A549 (cell line): ENCODE measurements at regions of chr18 and their contacts with region 1.

Region 1: GRCh38 chr18:21444465-21445023 is 156.0 kb downstream of the ESCO1 start:
- DNase-seq: peak; percentile 32 to 69
- ATAC-seq: peak in 1 of 2 experiments; percentile 83; a peak in 3 of 6 replicates
- H3K4me3 ChIP-seq: no peak overlapping the region
- H3K27ac ChIP-seq: no peak overlapping the region; a peak in 1 of 6 replicates
- H3K4me1 ChIP-seq: peaks cover 8% of the 10 kb centered on the region; the same call in 2 of the 3 replicates
- CTCF ChIP-seq: peak; percentile 69
- EP300 ChIP-seq: no peak
- POLR2A ChIP-seq: no peak
- RAD21 ChIP-seq: peak; percentile 78 to 82

Region 2: DNA sequence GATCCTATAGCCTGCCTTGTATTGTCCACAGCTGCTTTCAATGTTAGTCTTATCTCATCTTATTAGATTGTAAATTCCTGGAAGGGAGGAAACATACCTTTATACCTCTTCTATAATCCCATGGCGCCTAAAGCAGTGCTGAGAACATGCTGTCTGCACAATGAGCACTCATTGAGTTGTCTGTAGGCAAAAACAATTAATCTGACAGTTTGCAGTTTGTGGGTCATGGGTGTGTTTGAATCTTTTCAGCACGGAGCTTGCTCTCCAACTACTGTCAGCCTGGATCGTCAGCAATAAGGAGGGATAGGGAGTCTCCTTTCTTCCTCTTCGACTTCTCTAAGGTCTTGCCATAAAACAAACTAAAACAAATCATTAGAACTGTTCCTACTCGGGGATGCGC is 229.1 kb before region 1 on chr18:
- CTCF ChIA-PET with region 1: interaction called, 14 read pairs
- POLR2A ChIA-PET with region 1: no interaction called
- DNase-seq: no peak
- ATAC-seq: no peak
- H3K4me3 ChIP-seq: no peak overlapping the region
- H3K27ac ChIP-seq: no peak overlapping the region
- H3K4me1 ChIP-seq: no peaks in the 10 kb centered on the region
- CTCF ChIP-seq: no peak
- EP300 ChIP-seq: no peak
- POLR2A ChIP-seq: no peak
- RAD21 ChIP-seq: no peak

Region 3: DNA sequence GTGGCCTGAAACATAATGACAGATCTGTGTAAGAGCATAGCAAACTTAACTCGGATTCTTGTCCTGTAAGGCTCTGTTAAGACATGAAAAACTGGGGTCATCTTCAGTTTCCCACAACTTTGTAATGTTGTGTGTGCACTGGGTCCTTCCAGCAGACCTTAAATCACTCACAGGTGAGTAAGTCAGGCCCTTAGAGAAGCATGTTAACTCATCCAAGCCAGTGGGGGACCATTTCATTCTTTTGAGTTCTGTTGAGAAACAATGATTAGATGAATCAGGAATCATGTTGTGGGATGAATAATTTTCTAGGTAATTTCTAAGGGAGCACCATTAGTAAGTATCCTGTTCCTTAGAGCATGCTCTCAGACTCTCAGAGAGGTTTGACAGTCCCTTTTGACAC is 11.1 kb before region 1 on chr18:
- CTCF ChIA-PET with region 1: interaction called, 11 read pairs
- POLR2A ChIA-PET with region 1: no interaction called
- DNase-seq: no peak
- ATAC-seq: no peak
- H3K4me3 ChIP-seq: no peak overlapping the region
- H3K27ac ChIP-seq: no peak overlapping the region
- H3K4me1 ChIP-seq: no peaks in the 10 kb centered on the region
- CTCF ChIP-seq: no peak
- EP300 ChIP-seq: no peak
- POLR2A ChIP-seq: no peak
- RAD21 ChIP-seq: no peak

Region 4: GRCh38 chr18:21468514-21469164 is 24.1 kb after region 1 on chr18:
- CTCF ChIA-PET with region 1: no interaction called
- POLR2A ChIA-PET with region 1: no interaction called
- DNase-seq: no peak
- ATAC-seq: no peak
- H3K4me3 ChIP-seq: no peak overlapping the region
- H3K27ac ChIP-seq: no peak overlapping the region
- H3K4me1 ChIP-seq: no peaks in the 10 kb centered on the region
- CTCF ChIP-seq: no peak
- EP300 ChIP-seq: no peak
- POLR2A ChIP-seq: no peak
- RAD21 ChIP-seq: no peak

Region 5: DNA sequence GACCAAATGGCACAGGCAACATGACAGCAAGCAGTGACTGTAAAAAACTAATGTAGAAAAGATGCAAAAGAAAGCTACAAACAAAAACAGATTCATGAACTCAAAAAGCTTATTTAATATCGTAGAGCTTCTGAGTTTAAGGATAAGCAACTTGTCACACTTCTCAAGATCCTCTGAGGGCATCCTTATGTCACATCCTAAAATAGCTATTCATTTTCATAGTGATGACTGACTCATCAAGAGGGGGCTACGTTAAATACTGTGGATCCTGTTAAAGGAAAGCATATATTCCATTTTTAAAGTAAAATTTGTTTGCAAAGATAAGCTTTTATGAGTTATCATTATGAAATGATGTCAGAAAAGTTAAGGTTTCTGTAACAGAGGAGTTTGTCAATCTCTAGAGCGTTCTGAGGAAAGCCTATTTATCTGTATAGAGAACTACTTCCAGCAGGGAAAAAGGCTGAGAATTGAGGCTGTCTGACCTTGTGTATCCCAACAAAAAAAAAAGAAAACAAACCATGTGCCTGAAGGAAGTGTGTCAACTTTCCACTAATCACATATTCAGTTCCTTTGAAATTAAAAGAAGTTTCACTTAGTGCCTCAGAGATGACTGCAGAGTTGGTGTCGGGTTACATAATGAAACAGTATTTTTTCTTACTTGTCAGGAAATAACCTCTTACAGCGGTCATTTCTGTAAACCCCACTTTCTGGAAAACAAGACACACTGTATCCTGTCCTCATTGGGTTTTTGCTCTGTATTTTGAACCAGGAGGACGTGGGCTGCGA is 40.5 kb after region 1 on chr18:
- CTCF ChIA-PET with region 1: interaction called, 10 read pairs
- POLR2A ChIA-PET with region 1: no interaction called
- DNase-seq: no peak
- ATAC-seq: no peak
- H3K4me3 ChIP-seq: no peak overlapping the region
- H3K27ac ChIP-seq: no peak overlapping the region
- H3K4me1 ChIP-seq: no peaks in the 10 kb centered on the region
- CTCF ChIP-seq: no peak
- EP300 ChIP-seq: no peak
- POLR2A ChIP-seq: no peak
- RAD21 ChIP-seq: no peak

Region 6: DNA sequence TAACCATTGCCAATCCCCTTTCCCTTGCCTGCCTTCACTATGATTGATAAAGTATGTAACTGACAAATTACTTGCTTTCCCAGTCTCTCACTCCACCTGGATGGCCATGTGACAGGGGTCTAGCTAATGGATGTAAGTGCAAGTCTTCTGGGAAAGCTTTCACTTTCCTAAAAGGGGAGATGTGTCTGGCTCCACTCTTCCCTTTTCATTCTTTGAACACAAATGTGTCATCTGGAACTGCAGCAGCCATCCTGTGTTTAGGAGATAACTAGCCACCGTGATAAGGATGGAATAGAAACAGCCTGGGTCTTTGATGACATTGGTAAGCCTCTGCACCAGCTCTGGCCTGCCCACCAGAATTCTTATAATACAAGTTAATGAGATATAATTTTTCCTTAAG is 205.8 kb after region 1 on chr18:
- CTCF ChIA-PET with region 1: no interaction called
- POLR2A ChIA-PET with region 1: no interaction called
- DNase-seq: no peak
- ATAC-seq: no peak
- H3K4me3 ChIP-seq: no peak overlapping the region
- H3K27ac ChIP-seq: no peak overlapping the region
- H3K4me1 ChIP-seq: peaks cover 4% of the 10 kb centered on the region; the same call in 1 of the 3 replicates
- CTCF ChIP-seq: no peak
- EP300 ChIP-seq: no peak
- POLR2A ChIP-seq: no peak
- RAD21 ChIP-seq: no peak